ENCODE measurements at regions of chr3 and their contacts with region 1.

Region 1: DNA sequence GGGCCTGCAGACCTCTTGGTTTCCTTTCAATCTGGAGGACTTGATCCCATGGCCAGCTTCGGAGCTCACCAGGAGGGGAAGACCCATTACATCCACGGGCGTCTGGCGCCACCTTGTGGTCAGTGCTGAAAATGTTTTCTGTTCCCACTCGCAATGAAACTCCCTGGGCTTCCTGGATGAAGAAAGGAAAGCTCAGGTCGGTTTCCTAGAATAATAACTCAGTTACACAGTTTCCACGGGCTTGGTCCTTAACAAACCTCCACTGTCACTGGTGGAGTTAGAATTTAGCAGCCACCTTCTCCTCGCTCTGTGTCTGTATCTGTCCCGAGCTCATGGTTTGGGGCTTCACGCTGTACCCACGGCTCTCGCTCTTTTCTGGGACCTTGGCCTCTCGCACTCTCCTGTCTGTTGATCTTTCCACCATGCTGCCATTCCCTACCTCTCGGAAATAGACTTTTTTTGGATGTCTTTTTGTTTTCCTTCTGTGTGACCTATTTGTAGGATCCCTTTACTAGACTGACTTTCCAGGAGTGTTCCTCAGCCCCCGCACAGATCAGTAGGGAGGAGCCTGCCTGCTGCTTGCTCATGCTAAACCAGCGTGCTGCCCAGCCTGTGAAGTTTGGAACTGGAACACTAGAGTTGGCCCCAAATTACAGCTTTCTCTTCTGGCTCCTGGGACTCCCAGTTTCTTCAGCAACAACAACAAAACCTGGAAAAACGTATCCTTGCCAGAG is 56.3 kb downstream of the IL20RB start:
- DNase-seq: peak; percentile 74
- H3K4me3 Mint-ChIP-seq: peak overlapping the region; percentile 77
- H3K27ac Mint-ChIP-seq: no peak overlapping the region
- H3K4me1 Mint-ChIP-seq: peaks cover 5% of the 10 kb centered on the region
- H3K27me3 Mint-ChIP-seq: peaks cover 3% of the 10 kb centered on the region

Region 2: GRCh38 chr3:136075218-136075808 is 938.8 kb before region 1 on chr3:
- intact Hi-C with region 1: loop called (anchors 1 kb)
- DNase-seq: peak; percentile 53
- H3K4me3 Mint-ChIP-seq: no peak overlapping the region
- H3K27ac Mint-ChIP-seq: no peak overlapping the region
- H3K4me1 Mint-ChIP-seq: peaks cover 5% of the 10 kb centered on the region
- H3K27me3 Mint-ChIP-seq: peaks cover 7% of the 10 kb centered on the region

Region 3: GRCh38 chr3:136305878-136306277 is 708.2 kb before region 1 on chr3:
- intact Hi-C with region 1: loop called (anchors 5 kb)
- DNase-seq: no peak
- H3K4me3 Mint-ChIP-seq: no peak overlapping the region
- H3K27ac Mint-ChIP-seq: no peak overlapping the region
- H3K4me1 Mint-ChIP-seq: peaks cover 3% of the 10 kb centered on the region
- H3K27me3 Mint-ChIP-seq: no peaks in the 10 kb centered on the region

Region 4: DNA sequence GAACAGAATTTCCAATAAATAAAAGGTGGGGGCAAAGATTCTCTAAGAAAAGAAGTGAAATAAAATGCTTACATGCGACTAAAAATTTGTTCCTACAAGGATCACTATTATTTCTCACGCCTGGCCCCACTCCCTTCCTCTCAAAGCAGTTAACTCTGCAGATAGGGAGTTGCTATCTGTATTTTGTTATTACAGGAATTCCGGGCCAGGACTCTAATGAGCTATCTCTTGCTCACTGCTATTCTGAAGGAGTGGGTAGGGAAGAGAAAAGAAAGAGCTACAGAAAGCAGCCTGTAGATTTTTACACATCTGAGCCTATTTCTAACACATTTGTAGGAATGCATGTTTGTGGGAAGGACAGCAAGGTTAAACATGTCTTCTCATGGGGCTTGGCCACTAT is 623.5 kb before region 1 on chr3:
- intact Hi-C with region 1: loop called (anchors 2 kb)
- DNase-seq: no peak
- H3K4me3 Mint-ChIP-seq: no peak overlapping the region
- H3K27ac Mint-ChIP-seq: no peak overlapping the region
- H3K4me1 Mint-ChIP-seq: no peaks in the 10 kb centered on the region
- H3K27me3 Mint-ChIP-seq: no peaks in the 10 kb centered on the region

Region 5: DNA sequence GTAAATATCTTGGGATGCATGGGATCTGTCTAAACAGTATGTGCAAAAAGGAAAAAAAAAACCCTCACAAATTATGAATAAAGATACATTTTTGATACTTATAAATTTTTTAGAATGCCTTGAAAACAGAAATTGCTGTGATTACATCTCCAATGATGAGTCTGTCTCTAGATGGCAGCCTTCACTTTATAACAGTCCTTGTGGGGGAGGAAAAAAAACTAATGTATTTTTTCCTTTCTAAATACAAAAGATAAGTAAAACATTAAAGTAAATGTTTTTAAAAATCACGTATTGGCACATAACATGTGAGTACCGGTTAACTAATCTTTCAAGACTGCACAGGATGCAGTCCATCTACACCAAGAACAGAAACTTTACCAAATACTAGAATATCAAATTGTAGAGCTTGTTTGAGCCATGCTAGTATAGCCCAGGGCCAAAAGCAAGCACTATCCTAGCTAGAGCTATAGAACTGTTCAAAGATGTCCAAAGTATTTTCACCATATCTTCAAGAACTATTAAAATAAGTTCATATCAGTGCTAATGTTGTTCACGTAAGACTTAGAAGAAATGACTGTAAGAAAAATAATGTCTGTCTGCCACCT is 468.4 kb before region 1 on chr3:
- intact Hi-C with region 1: loop called (anchors 10 kb)
- DNase-seq: no peak
- H3K4me3 Mint-ChIP-seq: no peak overlapping the region
- H3K27ac Mint-ChIP-seq: no peak overlapping the region
- H3K4me1 Mint-ChIP-seq: peaks cover 8% of the 10 kb centered on the region
- H3K27me3 Mint-ChIP-seq: no peaks in the 10 kb centered on the region

Region 6: GRCh38 chr3:136818769-136819391 is 195.2 kb before region 1 on chr3 and contains the start of gene SLC35G2:
- intact Hi-C with region 1: loop called (anchors 1 kb)
- DNase-seq: no peak
- H3K4me3 Mint-ChIP-seq: peak within 1 kb of the TSS; percentile 85
- H3K27ac Mint-ChIP-seq: peak within 1 kb of the TSS; percentile 83
- H3K4me1 Mint-ChIP-seq: peaks cover 23% of the 10 kb centered on the region
- H3K27me3 Mint-ChIP-seq: peaks cover 31% of the 10 kb centered on the region
- total RNA-seq, gene SLC35G2: 7.3 and 7.7 TPM in 2 replicates

Region 7: DNA sequence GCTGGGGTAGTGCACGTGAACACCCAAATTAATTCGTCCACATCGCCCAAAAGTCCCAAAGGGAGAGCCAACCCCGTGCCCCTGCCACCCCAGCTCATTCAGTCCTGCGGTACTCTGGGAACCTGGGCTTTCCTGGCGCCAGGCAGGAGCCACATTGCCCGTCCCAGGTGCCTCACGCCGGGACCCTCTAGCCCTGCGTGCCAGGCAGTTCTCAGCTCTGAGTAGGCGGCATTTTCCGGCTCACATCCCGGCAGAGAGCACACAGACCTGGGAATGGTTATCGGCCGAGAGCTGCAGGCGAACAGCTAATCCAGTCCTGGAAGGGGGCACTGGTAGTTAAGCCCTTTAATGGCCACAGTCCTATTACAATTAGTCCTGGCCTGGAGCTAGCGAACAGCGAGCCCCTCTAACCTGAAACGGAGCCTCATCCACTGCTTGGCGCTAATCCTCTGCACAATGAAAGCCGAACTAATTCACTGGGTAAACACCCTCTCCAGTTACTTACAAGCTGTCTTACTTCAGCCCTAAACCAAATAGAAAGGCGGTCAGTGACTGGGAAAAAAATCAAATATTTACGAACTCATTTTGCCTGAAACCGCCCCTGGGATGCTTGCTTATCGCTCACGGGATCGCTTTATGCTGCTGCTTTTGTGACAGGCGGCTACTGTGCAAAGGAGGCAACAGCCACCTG is 495.4 kb after region 1 on chr3:
- intact Hi-C with region 1: no loop called
- DNase-seq: no peak
- H3K4me3 Mint-ChIP-seq: no peak overlapping the region
- H3K27ac Mint-ChIP-seq: no peak overlapping the region
- H3K4me1 Mint-ChIP-seq: no peaks in the 10 kb centered on the region
- H3K27me3 Mint-ChIP-seq: no peaks in the 10 kb centered on the region

Measured in activated T-helper 2 cell treated with anti-CD3 and anti-CD28 coated beads, Interferon-gamma antibody, Interleukin-2, Interleukin-4, amounts not matched to agents 10 μg/mL and 5 μg/mL and 100 μg/mL, durations not matched to agents 14 hours and 24 hours and 36 hours (primary cell).